ENCODE measurements at regions of chr2 and their contacts with region 1.

Region 1: GRCh38 chr2:188524519-188525113 is 232.9 kb downstream of the GULP1 start:
- DNase-seq: peak; percentile 17
- H3K4me3 ChIP-seq: no peak overlapping the region
- CTCF ChIP-seq: peak; percentile 42

Region 2: DNA sequence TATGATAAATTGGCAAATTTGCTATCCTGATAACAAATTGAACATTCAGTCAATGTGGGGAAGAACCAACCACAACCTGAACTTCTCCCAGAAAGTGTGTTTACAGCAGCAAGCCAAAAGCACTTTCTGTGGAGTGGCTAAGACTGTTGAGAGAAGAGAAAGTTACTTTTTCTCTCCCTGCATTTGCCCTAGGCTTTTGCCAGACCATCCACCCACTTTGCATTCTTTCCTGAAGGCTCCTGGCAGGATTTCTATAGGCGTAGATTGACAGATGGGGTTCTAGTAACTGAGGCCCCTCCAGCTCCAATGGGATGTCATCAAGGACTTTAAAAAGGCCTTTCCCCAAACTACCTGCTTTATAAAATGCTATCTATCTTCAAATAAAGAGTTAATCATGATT is 17.8 kb before region 1 on chr2:
- CTCF ChIA-PET with region 1: no interaction called
- POLR2A ChIA-PET with region 1: no interaction called
- DNase-seq: no peak
- H3K4me3 ChIP-seq: no peak overlapping the region
- CTCF ChIP-seq: no peak

Region 3: GRCh38 chr2:188623995-188624643 is 99.5 kb after region 1 on chr2:
- CTCF ChIA-PET with region 1: no interaction called
- POLR2A ChIA-PET with region 1: no interaction called
- DNase-seq: no peak
- H3K4me3 ChIP-seq: no peak overlapping the region
- CTCF ChIP-seq: no peak

Region 4: GRCh38 chr2:188701836-188702235 is 177.2 kb after region 1 on chr2:
- CTCF ChIA-PET with region 1: no interaction called
- POLR2A ChIA-PET with region 1: no interaction called
- DNase-seq: peak; percentile 31
- H3K4me3 ChIP-seq: no peak overlapping the region
- CTCF ChIP-seq: no peak

Region 5: DNA sequence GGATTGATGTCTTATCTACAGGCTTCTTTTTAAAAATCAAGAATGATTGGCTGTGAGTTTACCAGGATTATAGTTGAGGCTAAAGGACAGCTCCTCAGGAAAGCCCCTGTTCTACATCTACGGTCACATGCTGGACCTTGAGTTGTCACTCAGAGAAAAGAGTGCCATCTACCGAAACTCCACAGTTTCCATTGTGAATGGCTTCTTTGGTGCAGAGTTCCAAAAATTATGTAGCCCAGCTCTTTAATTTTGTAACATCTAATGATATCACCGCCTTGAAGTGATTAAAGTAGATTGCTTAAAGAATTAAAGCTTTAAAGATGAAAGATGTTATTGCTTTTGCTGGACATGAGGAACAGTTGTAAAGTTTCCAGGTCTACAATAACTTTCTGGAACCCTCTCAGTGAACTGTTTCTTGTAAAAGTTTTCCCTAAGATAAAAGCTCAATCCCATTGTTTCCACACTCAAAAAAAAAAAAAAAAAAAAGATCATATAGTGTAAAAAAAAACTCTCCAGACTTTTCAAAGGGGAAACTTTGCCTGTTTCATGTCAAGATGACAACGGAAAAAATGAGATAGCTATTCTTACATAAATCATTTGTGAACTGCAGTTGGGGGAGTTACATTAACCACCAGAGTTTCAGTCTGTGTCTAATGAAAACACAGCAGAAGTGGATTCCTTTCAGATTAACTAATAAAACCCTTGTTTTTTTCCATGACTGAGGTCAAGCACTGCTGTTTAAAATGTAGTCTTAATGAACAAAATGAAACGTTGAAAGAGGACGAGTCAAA is 453.9 kb after region 1 on chr2:
- CTCF ChIA-PET with region 1: interaction called, 138 read pairs
- POLR2A ChIA-PET with region 1: no interaction called
- DNase-seq: no peak
- H3K4me3 ChIP-seq: peak overlapping the region; percentile 60
- CTCF ChIP-seq: peak; percentile 25

Region 6: DNA sequence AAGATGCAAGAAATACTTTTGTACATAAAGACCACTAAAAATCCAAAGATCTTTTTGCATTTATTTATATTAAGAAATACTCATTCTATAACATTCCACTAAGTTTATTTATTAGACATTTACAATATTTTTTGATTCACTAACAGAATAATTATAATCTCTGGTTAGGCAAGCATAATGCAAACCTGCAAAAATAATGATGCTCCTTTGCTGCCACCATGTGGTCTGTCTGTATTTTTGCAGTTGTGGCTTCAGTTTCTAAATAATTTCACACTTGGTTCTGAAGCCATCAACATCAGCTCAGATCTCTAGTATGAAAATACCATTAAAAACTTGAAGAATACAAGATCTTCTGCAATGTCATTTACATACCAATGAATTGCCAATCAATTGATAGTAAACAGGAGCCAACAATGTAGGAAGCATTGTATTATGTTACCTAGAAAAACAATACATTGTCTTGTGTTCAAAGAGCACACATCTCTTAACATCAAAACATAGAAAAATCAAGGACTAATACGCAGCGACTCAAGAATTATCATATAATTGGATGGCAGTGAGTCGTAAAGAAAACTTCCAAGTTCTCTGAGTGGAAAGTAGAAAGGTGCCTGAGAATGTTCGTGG is 887.8 kb after region 1 on chr2:
- CTCF ChIA-PET with region 1: interaction called, 56 read pairs
- POLR2A ChIA-PET with region 1: no interaction called
- DNase-seq: no peak
- H3K4me3 ChIP-seq: no peak overlapping the region
- CTCF ChIP-seq: peak; percentile 43

Measured in AG04449 (cell line).